Activated B cell treated with CpG ODN at 0.5 μM for 24 hours (primary cell): ENCODE measurements at regions of chr1 and their contacts with region 1.

Region 1: GRCh38 chr1:107460035-107460434 is 319.2 kb downstream of the NTNG1 start:
- DNase-seq: no peak
- ATAC-seq: peak; percentile 83
- H3K4me3 Mint-ChIP-seq: peak overlapping the region; percentile 8
- H3K27ac Mint-ChIP-seq: peak overlapping the region; percentile 54
- H3K4me1 Mint-ChIP-seq: peaks cover 33% of the 10 kb centered on the region
- H3K27me3 Mint-ChIP-seq: no peaks in the 10 kb centered on the region
- CTCF ChIP-seq: no peak

Region 2: GRCh38 chr1:106785176-106785575 is 674.9 kb before region 1 on chr1:
- CTCF ChIA-PET with region 1: no interaction called
- POLR2A ChIA-PET with region 1: no interaction called
- intact Hi-C with region 1: no loop called
- DNase-seq: no peak
- ATAC-seq: no peak
- H3K4me3 Mint-ChIP-seq: no peak overlapping the region
- H3K27ac Mint-ChIP-seq: no peak overlapping the region
- H3K4me1 Mint-ChIP-seq: no peaks in the 10 kb centered on the region
- H3K27me3 Mint-ChIP-seq: no peaks in the 10 kb centered on the region
- CTCF ChIP-seq: no peak

Region 3: DNA sequence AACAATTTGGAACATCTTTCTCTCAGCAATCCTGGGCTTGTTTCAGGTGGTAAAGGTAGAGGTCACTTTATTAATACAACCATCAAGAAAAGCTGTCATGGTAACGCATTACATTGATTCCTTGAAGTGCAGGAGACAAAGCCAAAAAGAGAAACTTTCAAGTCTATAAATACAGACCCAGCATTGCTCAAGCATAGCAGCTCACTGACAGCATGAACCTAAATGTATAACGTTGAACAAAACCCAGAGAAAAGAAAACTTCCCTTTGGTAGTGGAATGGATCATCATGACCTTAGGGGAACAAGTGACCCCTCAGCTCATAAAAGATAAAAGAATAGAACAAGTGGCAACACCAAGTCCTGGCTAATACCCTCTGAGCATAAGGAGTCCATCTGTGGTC is 13.0 kb after region 1 on chr1:
- CTCF ChIA-PET with region 1: no interaction called
- POLR2A ChIA-PET with region 1: no interaction called
- intact Hi-C with region 1: loop called (anchors 2 kb)
- DNase-seq: no peak
- ATAC-seq: no peak
- H3K4me3 Mint-ChIP-seq: no peak overlapping the region
- H3K27ac Mint-ChIP-seq: no peak overlapping the region
- H3K4me1 Mint-ChIP-seq: peaks cover 8% of the 10 kb centered on the region
- H3K27me3 Mint-ChIP-seq: no peaks in the 10 kb centered on the region
- CTCF ChIP-seq: no peak

Region 4: GRCh38 chr1:107706182-107706581 is 246.1 kb after region 1 on chr1:
- CTCF ChIA-PET with region 1: no interaction called
- POLR2A ChIA-PET with region 1: no interaction called
- intact Hi-C with region 1: no loop called
- DNase-seq: no peak
- ATAC-seq: no peak
- H3K4me3 Mint-ChIP-seq: no peak overlapping the region
- H3K27ac Mint-ChIP-seq: no peak overlapping the region
- H3K4me1 Mint-ChIP-seq: no peaks in the 10 kb centered on the region
- H3K27me3 Mint-ChIP-seq: no peaks in the 10 kb centered on the region
- CTCF ChIP-seq: no peak